Ovary (tissue), 10 donors: ENCODE measurements at regions of chr6 and their contacts with region 1.

Region 1: DNA sequence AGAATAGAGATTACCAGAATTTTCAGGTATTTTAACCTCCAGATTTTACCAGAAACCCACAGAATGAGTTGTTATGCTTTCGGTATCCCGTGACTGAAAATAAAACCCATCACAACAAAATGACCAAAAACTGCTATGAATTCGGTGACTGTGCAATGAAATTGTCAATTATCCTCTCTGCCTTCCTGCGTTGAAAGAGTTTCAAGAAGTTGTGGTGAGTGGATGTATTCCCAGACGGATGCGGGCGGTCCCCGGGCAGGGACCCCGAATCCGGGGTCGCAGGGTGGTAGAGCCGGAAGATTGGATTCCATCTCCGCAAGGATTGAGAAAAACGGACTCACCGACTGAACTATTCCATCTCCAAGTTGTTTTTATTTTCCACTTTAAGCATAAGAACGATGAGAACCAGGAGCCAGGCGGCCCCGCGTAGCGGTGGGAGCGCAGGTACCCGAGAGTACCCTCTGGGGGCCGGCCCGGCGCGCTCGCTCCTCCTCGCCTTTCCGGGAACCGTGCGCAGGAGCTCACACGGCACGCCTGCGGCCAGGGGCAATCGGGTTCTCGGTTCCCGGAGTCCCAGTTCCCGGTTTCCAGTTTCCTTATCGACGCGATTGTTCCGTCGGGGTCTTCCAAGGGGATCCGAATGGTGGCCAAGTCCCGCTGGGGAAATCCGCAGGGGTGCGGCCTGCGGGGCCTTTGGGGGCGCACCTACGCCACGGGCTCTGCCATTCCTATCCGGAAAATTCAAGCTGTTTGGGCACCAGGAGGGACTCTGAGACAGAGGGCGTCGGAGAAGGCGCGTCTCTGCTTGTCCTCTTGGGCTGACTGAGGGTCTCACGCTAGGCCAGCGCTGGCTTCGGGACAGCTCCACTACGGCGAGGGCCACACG is 104.9 kb upstream of the PRDM1 start:
- DNase-seq: peak in 4 of 5 donors; percentile 24 to 56 (median 30)
- H3K4me3 ChIP-seq: peak overlapping the region; percentile 24
- H3K27ac ChIP-seq: no peak overlapping the region
- H3K4me1 ChIP-seq: no peaks in the 10 kb centered on the region
- H3K27me3 ChIP-seq: no peaks in the 10 kb centered on the region
- CTCF ChIP-seq: no peak
- EP300 ChIP-seq: no peak
- POLR2A ChIP-seq: no peak

Region 2: GRCh38 chr6:105793130-105793529 is 188.1 kb before region 1 on chr6:
- intact Hi-C with region 1: loop called in 1 of 4 experiments (anchors 10 kb)
- DNase-seq: no peak
- H3K4me3 ChIP-seq: no peak overlapping the region
- H3K27ac ChIP-seq: peak overlapping the region in 1 of 2 donors; percentile 43
- H3K4me1 ChIP-seq: peaks cover 14% of the 10 kb centered on the region
- H3K27me3 ChIP-seq: no peaks in the 10 kb centered on the region
- CTCF ChIP-seq: no peak
- EP300 ChIP-seq: no peak
- POLR2A ChIP-seq: no peak